ENCODE measurements at regions of chr17 and their contacts with region 1.

Region 1: DNA sequence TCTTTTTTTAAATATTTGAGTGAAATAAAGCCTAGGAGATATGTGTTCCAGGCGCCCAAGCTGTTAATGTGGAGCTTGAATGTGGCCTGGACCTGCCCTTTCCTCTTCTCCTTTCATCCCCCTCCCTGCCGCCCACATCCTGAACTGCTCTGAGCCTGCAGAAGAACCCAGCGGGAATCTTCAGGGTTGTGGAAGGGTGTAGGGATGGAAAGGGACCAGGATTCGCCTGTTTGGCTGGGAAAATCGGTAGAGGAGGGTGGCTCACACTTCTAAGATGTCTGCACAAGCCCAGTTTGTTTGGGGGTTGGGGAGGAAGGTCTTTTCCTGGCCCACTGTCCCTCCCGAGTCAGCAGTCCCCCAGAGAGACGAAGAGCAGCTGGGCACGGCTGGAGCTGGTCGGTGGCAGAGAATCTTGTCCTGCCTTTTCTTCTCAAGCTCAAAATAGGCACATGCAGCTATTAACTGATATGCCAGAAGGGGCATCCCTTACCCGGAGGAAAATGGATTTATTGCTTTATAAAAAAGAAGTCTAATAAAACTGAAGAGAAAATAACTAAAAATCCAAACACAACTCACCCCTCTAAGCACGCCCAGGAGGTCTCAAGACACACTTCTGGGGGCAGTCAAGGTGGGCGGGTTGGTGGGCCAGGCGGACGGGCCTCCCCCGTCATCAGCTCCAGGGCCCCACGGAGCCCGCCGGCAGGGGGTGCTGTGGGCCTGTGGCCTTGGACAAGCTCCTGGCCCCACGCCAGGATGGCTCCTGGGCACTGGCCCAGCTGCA is 11.5 kb upstream of the PITPNA start:
- DNase-seq: no peak
- H3K4me3 ChIP-seq: no peak overlapping the region
- CTCF ChIP-seq: peak; percentile 91

Region 2: GRCh38 chr17:1561400-1562175 is 12.5 kb before region 1 on chr17:
- CTCF ChIA-PET with region 1: interaction called, 16 read pairs
- POLR2A ChIA-PET with region 1: no interaction called
- DNase-seq: no peak
- H3K4me3 ChIP-seq: peak overlapping the region; percentile 74
- CTCF ChIP-seq: peak; percentile 35

Region 3: GRCh38 chr17:1617620-1618174 is 43.6 kb after region 1 on chr17:
- CTCF ChIA-PET with region 1: interaction called, 16 read pairs
- POLR2A ChIA-PET with region 1: no interaction called
- DNase-seq: peak; percentile 29
- H3K4me3 ChIP-seq: no peak overlapping the region
- CTCF ChIP-seq: no peak

Region 4: GRCh38 chr17:1628856-1629646 is 54.9 kb after region 1 on chr17:
- CTCF ChIA-PET with region 1: interaction called, 22 read pairs
- POLR2A ChIA-PET with region 1: interaction called, 3 read pairs
- DNase-seq: peak; percentile 36
- H3K4me3 ChIP-seq: peak overlapping the region; percentile 71
- CTCF ChIP-seq: peak; percentile 18